Dendritic cell treated with granulocyte-macrophage colony-stimulating factor and Interleukin-4, amounts not matched to agents 40 ng/mL and 50 ng/mL, for 4 days (primary cell): ENCODE measurements at regions of chr12 and their contacts with region 1.

Region 1: DNA sequence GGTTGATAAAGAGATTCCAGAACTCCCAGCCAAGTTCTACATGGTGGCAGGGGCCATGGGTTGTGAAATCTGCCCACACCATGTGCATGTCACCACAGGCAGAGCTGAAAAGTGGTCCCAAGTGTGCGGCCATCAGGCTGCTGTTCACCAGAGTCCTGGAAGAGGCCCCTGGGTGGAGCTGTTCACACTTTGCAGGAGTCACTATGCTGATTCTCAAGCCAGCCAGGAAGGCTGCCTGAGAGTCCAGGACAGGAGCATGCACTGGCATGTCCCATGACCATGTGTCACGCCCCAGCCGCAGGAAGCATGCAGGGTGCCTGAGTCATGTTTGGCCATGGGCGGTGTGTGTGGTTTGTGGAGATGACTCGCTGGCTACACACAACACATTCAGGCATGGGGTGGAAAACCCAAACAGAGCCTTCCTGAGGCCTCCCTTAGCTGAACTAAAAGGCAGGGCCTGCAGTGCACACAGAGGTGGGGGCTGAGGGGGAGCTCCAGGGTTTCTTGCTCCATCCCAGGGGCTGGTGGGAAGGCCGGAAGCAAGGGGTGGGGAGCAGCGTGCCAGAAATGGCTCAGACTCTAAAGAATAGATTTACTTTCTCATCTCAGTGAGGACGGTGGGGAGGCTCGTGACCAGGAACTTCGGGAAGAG is 19.4 kb downstream of the ABCB9 start:
- H3K4me3 Mint-ChIP-seq: peak overlapping the region; percentile 65
- H3K27ac Mint-ChIP-seq: peak overlapping the region; percentile 97
- H3K4me1 Mint-ChIP-seq: peaks cover 66% of the 10 kb centered on the region
- H3K27me3 Mint-ChIP-seq: peaks cover 4% of the 10 kb centered on the region

Region 2: DNA sequence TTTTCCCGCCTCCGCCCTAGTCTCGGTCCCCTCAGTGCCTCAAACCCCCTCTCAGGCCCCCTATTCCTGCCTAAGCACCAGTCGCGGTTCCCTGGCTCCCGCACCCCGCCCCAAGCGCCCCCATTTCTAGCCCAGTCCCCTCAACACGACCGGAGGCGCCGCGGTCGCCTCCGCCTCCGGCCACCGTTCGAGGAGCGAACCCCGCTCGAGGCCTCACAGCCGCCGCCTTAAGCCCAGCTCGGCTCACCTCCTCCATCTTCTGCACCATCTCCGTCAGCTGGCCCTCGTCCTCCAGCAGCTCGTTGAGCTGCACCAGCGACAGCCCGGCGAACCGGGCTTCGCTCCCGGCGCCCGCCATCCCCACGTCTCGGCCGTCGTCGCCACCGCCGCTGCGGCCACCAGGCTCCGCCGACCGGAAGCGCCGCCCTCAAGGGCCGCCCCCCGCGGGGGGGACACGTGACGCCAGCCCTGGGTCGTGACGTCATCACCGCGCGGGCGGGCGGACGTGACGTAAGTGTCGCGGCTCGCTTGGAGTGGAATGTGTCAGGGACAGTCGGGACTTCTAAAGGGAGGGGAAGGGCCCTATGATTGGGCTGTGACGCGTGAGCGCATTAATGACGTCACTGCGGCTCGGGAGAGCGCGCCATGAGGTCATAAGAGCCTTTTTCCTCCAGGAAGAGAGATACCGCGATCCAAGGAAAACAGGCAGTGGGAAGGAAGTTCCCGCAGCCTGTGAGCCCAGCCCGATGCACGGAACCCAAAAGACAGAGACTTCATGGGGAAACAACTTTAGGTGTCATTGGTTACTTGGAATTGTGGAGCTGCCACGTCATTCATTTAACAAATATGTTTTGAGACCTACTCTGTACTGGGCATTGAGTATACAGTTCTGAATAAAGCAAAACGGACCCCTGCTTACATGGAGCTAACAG is 50.8 kb before region 1 on chr12 and contains the start of gene VPS37B:
- intact Hi-C with region 1: loop called (anchors 5 kb)
- H3K4me3 Mint-ChIP-seq: peak within 1 kb of the TSS; percentile 89
- H3K27ac Mint-ChIP-seq: peak within 1 kb of the TSS; percentile 95
- H3K4me1 Mint-ChIP-seq: peaks cover 65% of the 10 kb centered on the region
- H3K27me3 Mint-ChIP-seq: peaks cover 6% of the 10 kb centered on the region

Region 3: GRCh38 chr12:123024819-123025391 is 78.1 kb after region 1 on chr12:
- intact Hi-C with region 1: no loop called
- H3K4me3 Mint-ChIP-seq: no peak overlapping the region
- H3K27ac Mint-ChIP-seq: no peak overlapping the region
- H3K4me1 Mint-ChIP-seq: no peaks in the 10 kb centered on the region
- H3K27me3 Mint-ChIP-seq: no peaks in the 10 kb centered on the region